ENCODE measurements at regions of chr2 and their contacts with region 1.

Region 1: DNA sequence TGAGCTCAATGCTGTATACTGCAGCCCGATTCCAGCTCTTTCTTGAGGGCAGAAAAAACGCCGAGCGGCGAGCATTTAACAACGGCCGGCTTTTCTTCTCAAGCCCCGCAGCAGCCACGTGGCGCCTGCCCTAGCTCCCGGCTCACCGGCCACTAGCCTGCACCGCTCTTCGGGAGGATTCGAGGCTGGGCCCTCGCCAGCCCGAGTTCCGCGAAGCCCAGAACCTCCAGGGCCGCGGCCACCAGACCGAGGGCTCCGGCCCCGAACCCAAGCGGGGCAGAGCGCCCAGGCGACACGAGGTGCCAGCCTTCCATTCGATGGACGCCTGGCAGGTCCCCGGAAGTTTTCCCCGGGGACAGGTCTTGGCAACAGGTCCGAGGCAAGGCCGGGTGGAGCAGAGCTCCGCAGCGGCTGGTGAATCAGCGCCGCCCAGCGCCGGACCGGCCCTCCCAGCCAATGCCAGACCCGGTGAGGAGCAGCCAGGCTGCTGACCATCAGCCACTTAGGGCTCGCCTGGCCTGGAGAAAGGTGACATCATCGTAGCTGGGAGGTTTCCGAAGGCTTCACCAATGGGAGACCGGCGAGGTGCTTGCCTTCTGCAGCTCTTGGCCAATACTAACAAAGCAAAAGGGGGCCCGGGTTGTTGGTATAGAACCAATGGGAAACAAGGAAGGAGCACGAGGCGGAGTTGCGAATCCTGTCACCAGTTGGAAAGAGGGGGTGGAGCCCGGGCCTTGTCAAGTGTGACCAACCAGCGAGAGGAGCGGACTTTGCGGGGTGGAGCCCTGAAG is 544 bp upstream of the MXD1 start:
- DNase-seq: peak; percentile 100
- H3K4me3 Mint-ChIP-seq: peak overlapping the region; percentile 78
- H3K27ac Mint-ChIP-seq: peak overlapping the region; percentile 90
- H3K4me1 Mint-ChIP-seq: peaks cover 42% of the 10 kb centered on the region
- H3K27me3 Mint-ChIP-seq: no peaks in the 10 kb centered on the region

Region 2: DNA sequence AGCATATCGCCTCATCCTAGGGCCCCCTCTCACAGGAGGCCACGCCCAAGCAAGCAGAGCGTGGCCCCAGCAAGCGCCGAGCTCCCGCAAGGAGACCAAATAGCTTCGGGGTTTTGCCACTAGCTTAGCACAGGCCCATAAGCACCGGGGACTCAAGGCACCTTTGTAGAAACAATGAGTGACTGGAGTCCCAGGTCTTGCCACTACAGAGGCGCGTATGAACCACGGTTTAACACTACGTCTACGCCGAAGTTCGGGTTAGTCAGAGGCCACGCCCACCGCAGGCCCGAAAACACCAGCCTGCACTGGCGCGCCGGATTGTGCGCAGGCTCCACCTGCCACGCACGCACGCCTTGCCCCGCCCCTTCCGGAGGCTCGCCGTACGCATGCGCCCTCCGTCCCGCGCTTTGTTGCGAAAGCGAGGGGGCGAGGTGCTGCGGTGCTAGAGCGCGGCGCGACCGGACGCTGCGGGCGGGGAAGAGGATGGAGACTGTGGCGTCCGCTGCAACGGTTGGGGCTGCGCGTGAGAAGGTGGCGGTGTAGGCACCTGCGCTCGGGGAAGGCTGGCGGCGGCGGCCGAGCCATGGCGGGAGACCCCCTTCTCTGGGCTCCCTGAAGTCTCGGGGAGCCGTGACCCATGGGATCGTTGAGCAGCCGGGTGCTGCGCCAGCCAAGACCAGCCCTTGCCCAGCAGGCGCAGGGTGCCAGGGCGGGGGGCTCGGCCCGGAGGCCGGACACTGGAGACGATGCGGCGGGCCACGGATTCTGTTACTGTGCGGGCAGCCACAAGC is 84.9 kb before region 1 on chr2 and contains the start of gene GMCL1:
- intact Hi-C with region 1: loop called (anchors 1 kb)
- DNase-seq: peak; percentile 99
- H3K4me3 Mint-ChIP-seq: peak within 1 kb of the TSS; percentile 98
- H3K27ac Mint-ChIP-seq: peak within 1 kb of the TSS; percentile 95
- H3K4me1 Mint-ChIP-seq: peaks cover 59% of the 10 kb centered on the region
- H3K27me3 Mint-ChIP-seq: no peaks in the 10 kb centered on the region
- total RNA-seq, gene GMCL1: 25.6 and 32.8 TPM in 2 replicates

Region 3: DNA sequence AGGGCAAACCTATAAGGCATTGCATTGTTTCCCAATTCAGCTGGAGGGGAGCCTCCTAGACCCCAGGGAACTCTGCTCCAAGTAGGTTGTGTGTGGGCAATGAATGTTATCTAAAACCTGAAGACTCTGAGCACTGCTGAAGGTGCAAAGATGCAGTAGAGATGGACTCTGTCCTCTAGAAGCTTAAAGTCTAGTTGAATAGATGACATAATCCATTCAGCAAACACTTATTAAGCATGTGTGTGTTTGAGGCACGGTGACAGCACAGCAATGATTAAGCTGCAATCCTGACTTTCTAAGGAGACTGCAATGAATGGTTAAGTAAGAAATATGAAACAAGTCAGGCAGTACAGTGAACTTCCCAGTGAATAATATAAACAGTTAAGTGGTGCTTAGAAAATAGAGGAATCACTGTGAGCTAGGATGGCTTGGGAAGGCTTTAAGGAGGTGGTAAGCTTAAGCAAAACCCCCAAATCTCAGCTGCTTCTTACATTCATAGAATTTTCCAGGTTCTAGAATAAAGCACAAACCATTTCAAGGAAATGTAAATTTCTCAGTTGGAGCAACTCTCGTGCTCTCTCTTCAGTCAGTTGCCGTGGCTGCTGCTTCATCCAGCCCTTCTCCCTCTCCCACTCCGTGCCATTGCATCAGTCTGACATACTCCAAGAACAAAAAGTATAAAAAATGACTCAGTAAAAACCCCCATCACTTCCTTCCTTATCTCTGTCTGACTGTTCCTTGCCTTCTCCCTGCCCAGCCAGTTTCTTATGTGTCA is 19.7 kb after region 1 on chr2:
- intact Hi-C with region 1: loop called (anchors 1 kb)
- DNase-seq: no peak
- H3K4me3 Mint-ChIP-seq: peak overlapping the region; percentile 1
- H3K27ac Mint-ChIP-seq: peak overlapping the region; percentile 75
- H3K4me1 Mint-ChIP-seq: peaks cover 41% of the 10 kb centered on the region
- H3K27me3 Mint-ChIP-seq: no peaks in the 10 kb centered on the region

Region 4: GRCh38 chr2:70069049-70069448 is 154.7 kb after region 1 on chr2:
- intact Hi-C with region 1: loop called (anchors 1 kb)
- DNase-seq: peak; percentile 81
- H3K4me3 Mint-ChIP-seq: peak overlapping the region; percentile 68
- H3K27ac Mint-ChIP-seq: peak overlapping the region; percentile 83
- H3K4me1 Mint-ChIP-seq: peaks cover 47% of the 10 kb centered on the region
- H3K27me3 Mint-ChIP-seq: no peaks in the 10 kb centered on the region

Region 5: GRCh38 chr2:70124983-70125480 is 210.7 kb after region 1 on chr2:
- intact Hi-C with region 1: loop called (anchors 1 kb)
- DNase-seq: peak; percentile 42
- H3K4me3 Mint-ChIP-seq: peak overlapping the region; percentile 93
- H3K27ac Mint-ChIP-seq: peak overlapping the region; percentile 99
- H3K4me1 Mint-ChIP-seq: peaks cover 78% of the 10 kb centered on the region
- H3K27me3 Mint-ChIP-seq: no peaks in the 10 kb centered on the region

Region 6: GRCh38 chr2:70248181-70248847 is 333.9 kb after region 1 on chr2 and contains the start of gene TIA1:
- intact Hi-C with region 1: loop called (anchors 1 kb)
- DNase-seq: peak; percentile 98
- H3K4me3 Mint-ChIP-seq: peak within 1 kb of the TSS; percentile 99
- H3K27ac Mint-ChIP-seq: peak within 1 kb of the TSS; percentile 99
- H3K4me1 Mint-ChIP-seq: peaks cover 42% of the 10 kb centered on the region
- H3K27me3 Mint-ChIP-seq: no peaks in the 10 kb centered on the region
- total RNA-seq, gene TIA1: 96.8 and 101 TPM in 2 replicates